A549 (cell line): ENCODE measurements at regions of chr14 and their contacts with region 1.

Region 1: GRCh38 chr14:75709207-75709812 is 48.3 kb downstream of the TTLL5 start:
- DNase-seq: peak; percentile 65 to 80
- ATAC-seq: peak; percentile 68 to 82; a peak in 5 of 6 replicates
- H3K4me3 ChIP-seq: no peak overlapping the region
- H3K27ac ChIP-seq: no peak overlapping the region
- H3K4me1 ChIP-seq: peaks cover 21% of the 10 kb centered on the region
- CTCF ChIP-seq: peak; percentile 82
- EP300 ChIP-seq: no peak
- POLR2A ChIP-seq: no peak
- RAD21 ChIP-seq: peak; percentile 77 to 82

Region 2: DNA sequence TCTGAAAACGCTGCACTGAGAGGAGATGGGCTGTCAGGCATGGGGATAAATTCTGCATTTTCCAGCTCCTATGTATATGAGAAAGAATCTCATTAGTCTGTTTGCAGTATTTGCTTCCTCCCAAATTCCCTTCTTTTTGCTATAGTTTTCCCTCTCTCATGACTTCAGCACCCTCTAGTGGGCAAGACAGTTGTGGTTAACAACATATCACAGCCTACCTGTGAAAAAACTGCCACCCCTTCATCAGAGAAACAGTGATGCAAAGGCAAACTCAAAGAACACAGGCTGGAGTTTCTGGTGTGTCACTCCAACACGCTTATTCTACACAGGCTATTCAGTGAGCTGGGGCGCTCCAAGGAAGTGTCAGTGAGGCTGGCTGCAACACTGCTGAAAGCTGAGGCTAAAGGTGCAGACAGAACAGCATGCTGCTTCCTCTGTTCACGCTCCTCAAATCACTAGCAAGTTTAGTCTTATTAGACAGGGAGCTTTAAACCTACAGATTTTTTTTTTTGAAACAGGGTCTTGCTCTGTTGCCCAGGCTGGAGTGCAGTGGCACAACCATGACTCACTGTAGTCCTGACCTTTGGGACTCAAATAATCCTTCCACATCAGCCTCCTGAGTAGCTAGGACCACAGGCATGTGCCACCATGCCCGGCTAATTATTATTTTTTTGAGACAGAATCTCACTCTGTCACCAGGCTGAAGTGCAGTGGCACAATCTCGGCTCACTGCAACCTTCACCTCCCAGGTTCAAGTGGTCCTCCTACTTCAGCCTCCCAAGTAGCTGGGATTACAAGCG is 620.5 kb before region 1 on chr14:
- CTCF ChIA-PET with region 1: no interaction called
- POLR2A ChIA-PET with region 1: no interaction called
- DNase-seq: peak; percentile 43 to 63
- ATAC-seq: peak; percentile 90 to 94
- H3K4me3 ChIP-seq: no peak overlapping the region
- H3K27ac ChIP-seq: no peak overlapping the region
- H3K4me1 ChIP-seq: no peaks in the 10 kb centered on the region
- CTCF ChIP-seq: peak; percentile 86
- EP300 ChIP-seq: no peak
- POLR2A ChIP-seq: no peak
- RAD21 ChIP-seq: peak; percentile 84 to 93

Region 3: GRCh38 chr14:75615200-75615599 is 94.1 kb before region 1 on chr14:
- CTCF ChIA-PET with region 1: no interaction called
- POLR2A ChIA-PET with region 1: no interaction called
- DNase-seq: no peak
- ATAC-seq: no peak
- H3K4me3 ChIP-seq: no peak overlapping the region
- H3K27ac ChIP-seq: no peak overlapping the region
- H3K4me1 ChIP-seq: no peaks in the 10 kb centered on the region
- CTCF ChIP-seq: no peak
- EP300 ChIP-seq: no peak
- POLR2A ChIP-seq: no peak
- RAD21 ChIP-seq: no peak

Region 4: DNA sequence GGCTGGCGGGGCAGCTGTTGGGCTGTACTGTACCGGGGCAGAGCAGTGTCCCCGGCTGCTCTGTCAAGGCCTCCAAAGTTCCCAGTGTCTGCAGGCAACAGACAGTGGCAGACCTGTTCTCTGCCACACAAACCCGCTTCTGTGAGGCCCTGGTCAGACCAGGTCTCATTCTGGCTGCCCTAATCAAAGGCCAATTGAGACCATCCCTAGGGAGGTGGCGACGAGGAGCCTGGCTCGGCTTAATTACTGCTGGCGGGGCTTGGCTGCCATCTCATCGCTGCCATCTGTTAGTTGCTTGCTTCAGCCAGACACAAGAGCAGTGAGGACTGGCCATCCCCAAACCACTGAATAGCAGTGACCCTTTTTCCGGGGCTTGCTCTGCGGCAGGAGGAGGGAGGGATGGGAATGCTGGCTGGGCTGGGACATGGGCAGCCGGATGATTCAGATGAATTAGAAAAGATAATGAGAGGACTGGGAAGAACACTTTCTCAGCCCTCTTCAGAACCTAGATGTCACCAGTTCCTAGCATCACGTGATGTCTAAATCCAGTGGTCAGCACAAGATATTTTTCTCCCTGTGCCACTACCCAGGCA is 73.1 kb before region 1 on chr14:
- CTCF ChIA-PET with region 1: no interaction called
- POLR2A ChIA-PET with region 1: no interaction called
- DNase-seq: no peak
- ATAC-seq: no peak
- H3K4me3 ChIP-seq: no peak overlapping the region
- H3K27ac ChIP-seq: no peak overlapping the region
- H3K4me1 ChIP-seq: no peaks in the 10 kb centered on the region
- CTCF ChIP-seq: no peak
- EP300 ChIP-seq: no peak
- POLR2A ChIP-seq: no peak
- RAD21 ChIP-seq: no peak

Region 5: DNA sequence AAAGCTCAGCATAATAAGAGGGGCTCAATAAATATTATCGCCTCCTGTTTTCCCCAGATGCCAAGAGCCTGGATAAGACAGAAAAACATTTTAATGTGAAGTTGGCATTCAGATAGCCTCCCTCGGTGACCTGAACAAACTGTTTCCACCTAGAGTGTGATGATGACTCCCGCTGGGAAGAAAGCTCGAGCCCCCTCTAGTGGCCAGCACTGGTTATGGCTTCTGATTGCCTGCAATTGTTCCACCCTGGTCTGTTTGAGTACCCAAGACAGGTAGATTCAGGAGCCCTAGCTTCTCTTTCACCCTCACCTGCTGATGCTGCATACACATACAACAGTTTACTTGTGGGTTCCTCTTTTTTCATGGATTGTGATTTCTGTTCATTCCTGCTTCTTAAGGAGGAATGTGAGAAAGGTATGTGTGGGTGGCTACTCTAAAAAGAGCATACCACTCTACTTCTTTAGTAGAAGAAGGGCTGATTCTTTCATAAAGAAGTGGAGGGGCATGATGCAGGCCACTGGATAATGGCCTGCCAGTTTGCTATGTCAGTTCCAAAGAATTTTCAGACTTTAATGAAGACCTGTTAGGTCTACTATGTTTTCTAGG is 55.1 kb before region 1 on chr14:
- CTCF ChIA-PET with region 1: interaction called, 13 read pairs
- POLR2A ChIA-PET with region 1: no interaction called
- DNase-seq: peak; percentile 66 to 86
- ATAC-seq: peak; percentile 93 to 98
- H3K4me3 ChIP-seq: no peak overlapping the region
- H3K27ac ChIP-seq: peak overlapping the region; percentile 2 to 24; a peak in 1 of 6 replicates
- H3K4me1 ChIP-seq: peaks cover 16% of the 10 kb centered on the region; the same call in 2 of the 3 replicates
- CTCF ChIP-seq: peak; percentile 94
- EP300 ChIP-seq: no peak
- POLR2A ChIP-seq: no peak
- RAD21 ChIP-seq: peak; percentile 91 to 95

Region 6: GRCh38 chr14:75726321-75726720 is 17.0 kb after region 1 on chr14:
- CTCF ChIA-PET with region 1: interaction called, 24 read pairs
- POLR2A ChIA-PET with region 1: no interaction called
- DNase-seq: no peak
- ATAC-seq: no peak
- H3K4me3 ChIP-seq: no peak overlapping the region
- H3K27ac ChIP-seq: no peak overlapping the region
- H3K4me1 ChIP-seq: no peaks in the 10 kb centered on the region
- CTCF ChIP-seq: no peak
- EP300 ChIP-seq: no peak
- POLR2A ChIP-seq: no peak
- RAD21 ChIP-seq: no peak

Region 7: DNA sequence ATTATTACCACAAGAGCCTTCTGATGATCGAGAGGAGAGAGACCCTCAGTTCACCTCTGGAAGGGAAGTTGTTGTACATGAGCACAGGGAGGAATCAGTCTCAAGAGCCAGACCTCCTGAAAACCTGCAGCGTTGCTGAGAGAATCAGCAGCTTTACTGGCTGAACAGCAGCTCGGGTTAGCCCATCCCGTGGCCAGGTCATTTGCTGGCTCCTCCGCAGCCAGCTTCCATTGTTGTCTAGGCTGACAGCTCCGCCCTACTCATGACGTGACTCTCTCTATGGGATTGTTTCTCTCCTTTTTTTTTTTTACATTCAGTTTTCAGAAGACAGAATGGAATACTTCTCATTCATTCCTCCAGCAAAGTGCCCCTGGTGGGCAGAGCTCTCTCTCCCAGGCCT is 202.6 kb after region 1 on chr14:
- CTCF ChIA-PET with region 1: interaction called, 25 read pairs
- POLR2A ChIA-PET with region 1: no interaction called
- DNase-seq: no peak
- ATAC-seq: no peak
- H3K4me3 ChIP-seq: no peak overlapping the region
- H3K27ac ChIP-seq: no peak overlapping the region
- H3K4me1 ChIP-seq: no peaks in the 10 kb centered on the region
- CTCF ChIP-seq: no peak
- EP300 ChIP-seq: no peak
- POLR2A ChIP-seq: no peak
- RAD21 ChIP-seq: no peak

Region 8: GRCh38 chr14:75982266-75983018 is 273.1 kb after region 1 on chr14:
- CTCF ChIA-PET with region 1: interaction called, 448 read pairs
- POLR2A ChIA-PET with region 1: interaction called, 11 read pairs
- DNase-seq: peak; percentile 73 to 74
- ATAC-seq: peak; percentile 75 to 88
- H3K4me3 ChIP-seq: peak overlapping the region; percentile 74
- H3K27ac ChIP-seq: peak overlapping the region; percentile 66 to 83
- H3K4me1 ChIP-seq: peaks cover 22% of the 10 kb centered on the region; the same call in 2 of the 3 replicates
- CTCF ChIP-seq: peak; percentile 68
- EP300 ChIP-seq: no peak
- POLR2A ChIP-seq: no peak
- RAD21 ChIP-seq: peak; percentile 79 to 93

Region 9: GRCh38 chr14:76352639-76353281 is 643.5 kb after region 1 on chr14:
- CTCF ChIA-PET with region 1: interaction called, 22 read pairs
- POLR2A ChIA-PET with region 1: no interaction called
- DNase-seq: peak; percentile 49 to 66
- ATAC-seq: peak; percentile 86 to 97
- H3K4me3 ChIP-seq: no peak overlapping the region
- H3K27ac ChIP-seq: peak overlapping the region in 1 of 2 experiments; percentile 25; a peak in 1 of 6 replicates
- H3K4me1 ChIP-seq: no peaks in the 10 kb centered on the region
- CTCF ChIP-seq: peak; percentile 84
- EP300 ChIP-seq: no peak
- POLR2A ChIP-seq: no peak
- RAD21 ChIP-seq: peak; percentile 67 to 82